ENCODE measurements at regions of chr9 and their contacts with region 1.

Region 1: DNA sequence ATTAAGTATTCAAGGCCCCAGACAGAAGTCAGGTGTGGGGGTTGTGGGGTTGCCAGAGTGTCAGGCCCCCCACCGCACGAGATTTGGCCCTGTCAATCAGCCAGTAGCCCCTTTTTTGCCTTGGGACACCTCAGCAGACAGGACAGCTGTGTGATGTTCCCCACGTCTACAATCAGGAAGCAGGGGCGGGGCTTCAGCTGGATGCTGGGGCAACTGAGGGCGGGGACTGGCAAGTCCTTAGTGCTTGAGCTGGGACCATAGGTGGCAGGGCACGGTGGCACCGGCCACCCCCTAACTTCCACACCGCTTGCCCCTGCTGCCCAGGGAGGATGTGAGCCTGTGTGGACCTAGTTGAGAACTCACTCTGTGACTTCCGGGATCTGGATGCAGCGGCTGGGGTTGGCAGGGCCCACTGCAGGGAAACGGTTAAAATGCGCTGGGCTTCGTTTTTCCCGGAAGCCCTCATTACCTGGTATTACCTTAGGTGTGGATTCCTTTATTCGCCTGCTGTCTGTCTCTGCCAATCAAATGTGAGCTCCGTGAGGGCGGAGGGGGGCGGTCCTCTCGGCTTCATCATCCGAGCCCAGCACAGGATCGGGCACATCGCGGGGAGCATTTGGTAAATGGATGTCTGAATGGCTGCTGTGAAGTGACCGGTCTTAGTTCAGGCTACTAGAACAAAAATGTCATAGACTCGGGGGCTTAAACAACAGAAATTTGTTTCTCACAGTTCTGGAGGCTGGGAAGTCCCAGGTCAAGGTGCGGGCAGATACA is 7.5 kb upstream of the GTF3C5 start:
- DNase-seq: no peak
- H3K4me3 ChIP-seq: no peak overlapping the region
- H3K27ac ChIP-seq: no peak overlapping the region
- H3K4me1 ChIP-seq: peaks cover 0 to 6% (median 2%) of the 10 kb centered on the region in 4 donors
- H3K27me3 ChIP-seq: no peaks in the 10 kb centered on the region
- CTCF ChIP-seq: no peak
- EP300 ChIP-seq: no peak
- POLR2A ChIP-seq: no peak

Region 2: GRCh38 chr9:133335878-133336811 is 312.8 kb after region 1 on chr9 and contains the start of gene SURF6:
- intact Hi-C with region 1: loop called (anchors 10 kb)
- DNase-seq: peak; percentile 93
- H3K4me3 ChIP-seq: peak within 1 kb of the TSS; percentile 84 to 94 (median 88)
- H3K27ac ChIP-seq: peak within 1 kb of the TSS; percentile 75 to 83 (median 80)
- H3K4me1 ChIP-seq: peaks cover 0 to 28% (median 25%) of the 10 kb centered on the region in 4 donors
- H3K27me3 ChIP-seq: no peaks in the 10 kb centered on the region
- CTCF ChIP-seq: no peak
- EP300 ChIP-seq: no peak
- POLR2A ChIP-seq: no peak
- total RNA-seq, gene SURF6: 13.9 to 20.1 (median 16.2) TPM

Measured in sigmoid colon (tissue), 7 donors.